IMR-90 (cell line): ENCODE measurements at regions of chr20 and their contacts with region 1.

Region 1: DNA sequence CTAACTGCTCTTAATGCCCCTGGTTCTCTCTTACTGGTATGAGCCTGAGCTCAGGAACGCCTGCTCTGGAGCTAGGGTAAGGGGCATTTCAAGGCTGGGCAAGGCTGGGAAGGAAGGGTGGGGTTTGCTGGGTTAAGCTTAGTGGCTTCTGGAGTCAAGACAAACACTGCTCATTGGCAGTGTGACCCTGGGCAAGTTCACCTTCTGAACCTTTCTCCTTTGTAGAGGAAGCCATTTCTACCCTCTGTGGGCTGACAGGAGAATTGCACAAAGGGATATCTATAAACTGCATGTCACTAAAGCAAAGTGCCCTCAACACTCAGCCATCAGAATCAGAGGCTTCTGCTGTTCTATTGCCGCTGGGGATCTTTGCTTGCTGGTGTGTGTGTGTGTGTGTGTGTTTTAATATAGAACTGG is 20.3 kb upstream of the LRRN4 start:
- DNase-seq: no peak
- ATAC-seq: peak; percentile 70
- H3K4me3 ChIP-seq: no peak overlapping the region
- H3K27ac ChIP-seq: no peak overlapping the region
- H3K4me1 ChIP-seq: no peaks in the 10 kb centered on the region
- H3K27me3 ChIP-seq: no peaks in the 10 kb centered on the region
- CTCF ChIP-seq: peak; percentile 15; the same call in 1 of the 2 replicates
- POLR2A ChIP-seq: no peak
- RAD21 ChIP-seq: no peak

Region 2: DNA sequence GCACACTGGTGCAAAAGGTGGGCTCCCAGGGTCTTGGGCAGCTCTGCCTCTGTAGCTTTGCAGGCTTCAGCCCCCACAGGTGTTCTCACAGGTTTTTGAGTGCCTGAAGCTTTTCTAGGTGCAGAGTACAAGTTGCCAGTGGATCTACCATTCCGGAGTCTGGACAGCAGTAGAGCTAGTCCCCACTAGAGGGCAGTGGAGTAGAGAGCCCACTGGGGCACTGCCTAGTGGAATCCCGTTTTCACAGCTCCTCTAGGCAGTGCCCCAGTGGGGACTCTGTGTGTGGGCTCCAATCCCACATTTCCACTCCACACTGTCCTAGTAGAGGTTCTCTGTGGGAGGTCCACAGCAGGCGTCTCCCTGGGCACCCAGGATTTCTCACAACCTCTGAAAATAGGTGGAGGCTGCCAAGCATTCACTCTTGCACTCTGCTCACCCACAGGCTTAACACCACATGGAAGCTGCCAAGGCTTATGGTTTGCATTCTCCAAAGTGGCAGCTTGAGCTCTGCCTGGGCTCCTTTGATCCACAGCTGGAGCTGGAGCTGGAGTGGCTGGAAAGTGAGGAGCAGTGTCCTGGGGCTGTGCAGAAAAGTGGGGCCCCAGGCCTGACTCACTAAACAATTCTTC is 671.1 kb before region 1 on chr20:
- CTCF ChIA-PET with region 1: no interaction called
- POLR2A ChIA-PET with region 1: no interaction called
- dilution Hi-C with region 1: no loop called
- in situ Hi-C with region 1: no loop called
- intact Hi-C with region 1: loop called (anchors 5 kb)
- DNase-seq: peak; percentile 11
- ATAC-seq: peak; percentile 84
- H3K4me3 ChIP-seq: no peak overlapping the region
- H3K27ac ChIP-seq: no peak overlapping the region
- H3K4me1 ChIP-seq: no peaks in the 10 kb centered on the region
- H3K27me3 ChIP-seq: no peaks in the 10 kb centered on the region
- CTCF ChIP-seq: peak; percentile 32; the same call in 1 of the 2 replicates
- POLR2A ChIP-seq: no peak
- RAD21 ChIP-seq: peak; percentile 14; the same call in 1 of the 2 replicates

Region 3: GRCh38 chr20:6122873-6123648 is 48.9 kb after region 1 on chr20 and contains the start of gene FERMT1:
- CTCF ChIA-PET with region 1: no interaction called
- POLR2A ChIA-PET with region 1: no interaction called
- dilution Hi-C with region 1: no loop called
- in situ Hi-C with region 1: no loop called
- intact Hi-C with region 1: no loop called
- DNase-seq: peak; percentile 54
- ATAC-seq: peak; percentile 96
- H3K4me3 ChIP-seq: peak within 1 kb of the TSS; percentile 47
- H3K27ac ChIP-seq: peak within 1 kb of the TSS; percentile 34; the same call in 1 of the 2 replicates
- H3K4me1 ChIP-seq: peaks cover 3% of the 10 kb centered on the region; the same call in 1 of the 2 replicates
- H3K27me3 ChIP-seq: peaks cover 3% of the 10 kb centered on the region; the same call in 1 of the 2 replicates
- CTCF ChIP-seq: no peak
- POLR2A ChIP-seq: no peak
- RAD21 ChIP-seq: no peak
- total RNA-seq, gene FERMT1: 1.7 and 2.3 TPM in 2 replicates

Region 4: GRCh38 chr20:6200092-6200491 is 125.9 kb after region 1 on chr20:
- CTCF ChIA-PET with region 1: no interaction called
- POLR2A ChIA-PET with region 1: no interaction called
- dilution Hi-C with region 1: no loop called
- in situ Hi-C with region 1: no loop called
- intact Hi-C with region 1: no loop called
- DNase-seq: no peak
- ATAC-seq: no peak
- H3K4me3 ChIP-seq: no peak overlapping the region
- H3K27ac ChIP-seq: no peak overlapping the region
- H3K4me1 ChIP-seq: no peaks in the 10 kb centered on the region
- H3K27me3 ChIP-seq: no peaks in the 10 kb centered on the region
- CTCF ChIP-seq: no peak
- POLR2A ChIP-seq: no peak
- RAD21 ChIP-seq: no peak